PC-9 (cell line): ENCODE measurements at regions of chrX and their contacts with region 1.

Region 1: DNA sequence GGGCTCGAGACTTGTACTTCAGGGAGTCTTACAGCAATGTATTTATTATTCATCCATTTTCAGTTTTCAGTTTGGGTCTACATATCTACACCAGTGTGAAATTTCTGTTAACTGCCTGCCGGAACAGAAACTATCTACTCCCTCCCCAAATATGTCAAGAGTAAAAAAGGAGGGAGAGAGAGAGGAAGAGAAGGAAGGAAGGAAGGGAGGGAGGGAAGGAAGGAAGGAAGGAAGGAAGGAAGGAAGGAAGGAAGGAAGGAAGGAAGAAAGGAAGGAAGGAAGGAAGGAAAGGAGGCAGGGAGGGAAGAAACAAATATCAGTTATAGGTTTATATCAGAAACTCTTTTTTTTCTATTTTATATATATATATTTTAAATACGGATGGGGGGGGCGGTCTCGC is 12.6 kb downstream of the RPL39 start:
- DNase-seq: no peak
- H3K4me3 ChIP-seq: no peak overlapping the region
- H3K27ac ChIP-seq: no peak overlapping the region
- H3K4me1 ChIP-seq: no peaks in the 10 kb centered on the region
- H3K27me3 ChIP-seq: no peaks in the 10 kb centered on the region
- CTCF ChIP-seq: no peak

Region 2: DNA sequence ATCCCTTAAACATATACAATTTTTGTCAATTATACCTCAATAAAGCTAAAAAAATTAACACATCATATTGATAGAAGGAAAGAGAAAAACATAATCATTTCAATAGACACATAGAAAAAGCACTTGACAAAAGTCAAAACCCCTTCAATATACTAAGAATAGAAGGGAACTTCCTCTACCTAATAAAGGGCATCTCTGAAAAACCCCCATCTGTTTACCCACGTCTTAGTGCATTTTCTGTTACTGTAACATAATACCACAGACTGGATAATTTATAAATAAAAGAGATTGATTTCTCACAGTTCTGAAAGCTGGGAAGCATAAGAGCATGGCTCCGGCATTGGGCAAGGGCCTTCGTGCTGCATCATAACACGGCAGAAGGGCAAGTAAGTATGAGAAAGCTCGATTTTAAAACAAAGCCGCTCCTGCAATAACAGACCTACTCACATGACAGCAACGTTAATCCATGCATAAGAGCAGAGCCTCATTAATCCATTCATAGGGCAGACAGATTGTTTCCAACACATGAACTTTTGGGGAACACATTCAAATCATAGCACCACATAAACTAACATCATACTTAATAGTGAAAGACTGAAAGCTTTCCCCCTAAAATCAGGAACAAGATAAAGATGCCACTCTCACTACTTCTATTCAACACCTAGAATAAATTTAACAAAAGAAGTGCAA is 229.4 kb before region 1 on chrX:
- CTCF ChIA-PET with region 1: no interaction called
- POLR2A ChIA-PET with region 1: no interaction called
- intact Hi-C with region 1: no loop called
- DNase-seq: no peak
- H3K4me3 ChIP-seq: no peak overlapping the region
- H3K27ac ChIP-seq: no peak overlapping the region
- H3K4me1 ChIP-seq: peaks cover 22% of the 10 kb centered on the region
- H3K27me3 ChIP-seq: no peaks in the 10 kb centered on the region
- CTCF ChIP-seq: no peak

Region 3: GRCh38 chrX:119729408-119730201 is 49.2 kb before region 1 on chrX:
- CTCF ChIA-PET with region 1: no interaction called
- POLR2A ChIA-PET with region 1: no interaction called
- intact Hi-C with region 1: loop called (anchors 2 kb)
- DNase-seq: peak; percentile 57 to 63
- H3K4me3 ChIP-seq: no peak overlapping the region
- H3K27ac ChIP-seq: no peak overlapping the region
- H3K4me1 ChIP-seq: no peaks in the 10 kb centered on the region
- H3K27me3 ChIP-seq: no peaks in the 10 kb centered on the region
- CTCF ChIP-seq: peak; percentile 78